OCI-LY7 (cell line): ENCODE measurements at regions of chr1 and their contacts with region 1.

Region 1: DNA sequence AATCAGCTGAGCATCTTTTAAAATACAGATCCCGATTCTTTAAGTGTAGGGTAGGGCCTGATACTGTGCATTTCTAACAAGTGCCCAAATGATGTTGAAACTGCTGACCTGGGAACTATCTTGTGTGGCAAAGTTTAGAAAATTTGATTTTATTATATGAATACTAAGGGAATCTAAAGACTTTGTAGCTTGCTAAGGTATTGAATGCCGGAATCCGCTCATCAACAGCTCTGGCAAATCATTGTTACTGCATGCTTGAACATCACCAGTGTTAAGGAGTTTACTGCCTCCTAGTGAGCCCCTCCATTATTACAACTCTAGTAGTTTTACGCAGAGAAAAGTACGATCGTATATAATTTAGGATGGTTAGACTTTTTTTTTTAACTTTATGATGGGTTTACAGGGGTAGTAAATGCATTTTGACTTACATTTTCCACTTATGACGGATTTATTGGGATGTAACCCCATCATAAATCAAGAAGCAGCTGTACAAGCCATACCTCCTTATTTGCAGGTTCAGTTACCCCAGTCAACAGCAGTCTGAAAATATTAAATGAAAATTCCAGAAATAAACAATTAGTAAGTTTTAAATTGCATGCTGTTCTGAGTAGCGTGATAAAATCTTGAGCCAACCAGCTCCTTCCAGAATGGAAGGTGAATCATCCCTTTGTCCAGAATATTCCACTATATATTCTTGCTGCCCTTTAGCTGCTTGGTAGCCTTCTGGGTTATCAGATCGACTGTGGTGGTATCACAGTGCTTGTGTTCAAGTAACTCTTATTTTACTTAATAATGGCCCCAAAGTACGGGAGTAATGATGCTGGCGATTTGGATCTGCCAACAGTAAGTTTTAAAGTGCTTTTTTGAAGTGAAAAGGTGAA is 892 bp downstream of the TYW3 start:
- DNase-seq: peak; percentile 87
- H3K4me3 ChIP-seq: peak overlapping the region; percentile 95
- H3K27ac ChIP-seq: peak overlapping the region; percentile 86
- H3K4me1 ChIP-seq: peaks cover 21% of the 10 kb centered on the region
- CTCF ChIP-seq: peak; percentile 87

Region 2: GRCh38 chr1:74197657-74198552 is 535.9 kb before region 1 on chr1 and contains the starts of genes FPGT and LRRIQ3:
- CTCF ChIA-PET with region 1: no interaction called
- POLR2A ChIA-PET with region 1: interaction called, 3 read pairs
- intact Hi-C with region 1: loop called (anchors 2 kb)
- DNase-seq: peak; percentile 95
- H3K4me3 ChIP-seq: peak within 1 kb of the TSS; percentile 80
- H3K27ac ChIP-seq: peak within 1 kb of the TSS; percentile 70
- H3K4me1 ChIP-seq: peaks cover 14% of the 10 kb centered on the region
- CTCF ChIP-seq: no peak
- total RNA-seq, gene FPGT: 2.9 and 9.4 TPM in 2 replicates
- total RNA-seq, gene LRRIQ3: 1.2 and 2.3 TPM in 2 replicates